ENCODE measurements at regions of chr4 and their contacts with region 1.

Region 1: GRCh38 chr4:99054428-99054994 is 34.1 kb downstream of the ADH5 start:
- DNase-seq: no peak
- H3K4me3 ChIP-seq: no peak overlapping the region
- H3K27ac ChIP-seq: no peak overlapping the region
- H3K4me1 ChIP-seq: peaks cover 29% of the 10 kb centered on the region
- H3K27me3 ChIP-seq: no peaks in the 10 kb centered on the region
- CTCF ChIP-seq: no peak

Region 2: DNA sequence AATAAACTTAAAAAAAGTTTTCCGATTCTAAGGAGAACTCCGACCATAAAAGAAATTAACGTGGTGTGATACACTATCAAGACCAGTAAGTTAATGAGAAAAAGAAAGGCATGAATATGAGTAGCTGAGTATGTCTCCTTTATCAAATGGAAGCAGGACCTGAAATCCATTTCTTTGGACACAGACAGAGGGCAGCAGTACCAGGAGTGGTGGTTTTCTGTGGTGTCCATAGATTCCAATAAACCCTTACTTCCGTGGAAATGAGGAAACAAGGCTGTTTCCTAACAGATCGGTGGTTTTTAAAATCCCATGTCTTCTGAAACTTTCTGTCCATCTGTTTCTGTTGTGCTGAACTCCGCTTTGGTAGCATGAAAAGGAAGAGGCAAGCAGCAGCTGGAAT is 267.6 kb before region 1 on chr4:
- intact Hi-C with region 1: no loop called
- DNase-seq: no peak
- H3K4me3 ChIP-seq: no peak overlapping the region
- H3K27ac ChIP-seq: no peak overlapping the region
- H3K4me1 ChIP-seq: no peaks in the 10 kb centered on the region
- H3K27me3 ChIP-seq: no peaks in the 10 kb centered on the region
- CTCF ChIP-seq: no peak

Region 3: GRCh38 chr4:98939892-98940298 is 114.6 kb before region 1 on chr4:
- intact Hi-C with region 1: loop called (anchors 10 kb)
- DNase-seq: no peak
- H3K4me3 ChIP-seq: no peak overlapping the region
- H3K27ac ChIP-seq: no peak overlapping the region
- H3K4me1 ChIP-seq: no peaks in the 10 kb centered on the region
- H3K27me3 ChIP-seq: no peaks in the 10 kb centered on the region
- CTCF ChIP-seq: peak; percentile 82

Region 4: GRCh38 chr4:99002279-99002678 is 52.2 kb before region 1 on chr4:
- intact Hi-C with region 1: loop called (anchors 10 kb)
- DNase-seq: no peak
- H3K4me3 ChIP-seq: no peak overlapping the region
- H3K27ac ChIP-seq: peak overlapping the region; percentile 27
- H3K4me1 ChIP-seq: peaks cover 59% of the 10 kb centered on the region
- H3K27me3 ChIP-seq: no peaks in the 10 kb centered on the region
- CTCF ChIP-seq: no peak

Region 5: GRCh38 chr4:99593781-99594636 is 539.5 kb after region 1 on chr4:
- intact Hi-C with region 1: no loop called
- DNase-seq: no peak
- H3K4me3 ChIP-seq: no peak overlapping the region
- H3K27ac ChIP-seq: no peak overlapping the region
- H3K4me1 ChIP-seq: no peaks in the 10 kb centered on the region
- H3K27me3 ChIP-seq: no peaks in the 10 kb centered on the region
- CTCF ChIP-seq: no peak